ENCODE measurements at regions of chr18 and their contacts with region 1.

Region 1: DNA sequence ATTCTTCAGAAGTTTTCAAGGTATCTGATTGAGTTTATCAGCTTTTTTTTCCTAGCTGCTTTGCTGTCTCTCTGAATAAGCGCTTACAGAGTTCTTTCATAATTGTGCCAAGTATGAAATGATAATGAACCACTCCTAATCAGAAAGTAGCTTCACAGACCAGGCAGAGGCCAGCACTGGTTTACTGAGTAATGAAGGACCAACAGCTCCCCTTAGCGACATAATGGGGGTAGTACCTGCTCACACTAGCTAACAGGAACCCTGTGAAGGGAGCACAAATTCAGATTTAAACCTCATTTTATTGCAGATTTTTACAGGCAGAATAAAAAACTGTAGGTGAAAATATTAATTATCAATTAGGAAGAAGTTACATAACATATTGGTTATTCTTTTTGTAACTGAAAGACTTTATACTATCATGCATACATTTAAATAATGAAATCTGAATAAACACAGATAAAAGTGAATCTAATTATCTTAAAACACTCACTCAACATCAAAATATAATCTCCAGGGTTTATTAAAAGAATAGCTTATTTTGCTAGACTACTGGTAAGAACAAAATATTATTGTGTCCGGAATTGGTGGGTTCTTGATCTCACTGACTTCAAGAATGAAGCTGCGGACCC is 53.7 kb upstream of the LRRC30 start:
- DNase-seq: peak in 1 of 2 donors; percentile 61
- H3K4me3 ChIP-seq: no peak overlapping the region
- H3K27ac ChIP-seq: no peak overlapping the region
- H3K4me1 ChIP-seq: peaks cover 0 to 5% (median 0%) of the 10 kb centered on the region in 4 donors
- H3K27me3 ChIP-seq: peaks cover 0 to 13% of the 10 kb centered on the region in 2 donors
- CTCF ChIP-seq: peak; percentile 67 to 69

Region 2: DNA sequence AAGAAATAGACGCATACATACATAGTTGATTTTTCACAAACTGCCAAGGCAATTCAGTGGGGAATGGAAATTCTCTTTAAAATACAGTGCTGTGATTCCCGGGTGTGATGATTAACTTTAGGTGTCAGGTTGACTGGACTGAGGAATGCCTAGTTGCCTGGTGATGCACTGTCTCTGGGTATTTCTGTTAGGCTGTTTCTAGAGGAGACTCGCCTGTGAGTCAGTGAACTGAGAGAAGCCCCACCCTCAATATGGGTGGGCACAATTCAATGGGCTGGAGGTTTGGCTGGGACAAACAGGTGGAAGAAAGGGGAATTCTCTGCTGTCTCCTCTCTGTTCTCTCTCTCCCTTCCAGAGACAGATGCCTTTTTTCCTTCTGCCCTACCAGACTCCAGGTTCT is 260.2 kb before region 1 on chr18:
- intact Hi-C with region 1: loop called (anchors 5 kb)
- DNase-seq: no peak
- H3K4me3 ChIP-seq: no peak overlapping the region
- H3K27ac ChIP-seq: no peak overlapping the region
- H3K4me1 ChIP-seq: no peaks in the 10 kb centered on the region
- H3K27me3 ChIP-seq: peaks cover 0 to 8% of the 10 kb centered on the region in 2 donors
- CTCF ChIP-seq: no peak

Region 3: DNA sequence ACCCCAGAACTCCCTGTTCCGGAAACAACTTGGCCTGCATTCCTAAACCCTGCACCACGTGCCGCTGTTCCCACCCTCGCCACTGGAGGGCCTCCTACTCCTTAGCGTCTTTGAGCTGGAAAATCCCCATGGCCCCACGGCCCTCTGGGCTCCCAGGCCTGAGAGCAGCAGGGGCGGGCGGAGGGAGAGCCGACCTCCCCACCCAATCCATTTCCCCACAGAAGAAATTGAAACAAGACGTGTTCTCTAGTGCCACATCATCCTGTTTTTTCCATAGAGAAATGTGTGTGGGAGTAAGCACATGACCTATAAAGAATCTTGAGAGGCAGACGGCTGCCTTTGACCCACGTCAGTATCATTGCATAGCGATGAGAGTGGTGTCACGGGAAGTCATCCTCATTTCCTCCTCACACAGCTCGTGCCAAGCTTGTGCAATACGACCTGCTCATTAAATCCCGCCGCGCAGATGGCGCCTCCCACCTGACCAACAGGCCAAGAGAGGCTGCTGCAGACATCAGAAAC is 138.8 kb before region 1 on chr18:
- intact Hi-C with region 1: loop called (anchors 2 kb)
- DNase-seq: peak; percentile 91 to 94
- H3K4me3 ChIP-seq: peak overlapping the region; percentile 33 to 40
- H3K27ac ChIP-seq: peak overlapping the region; percentile 52 to 58
- H3K4me1 ChIP-seq: peaks cover 0 to 14% (median 8%) of the 10 kb centered on the region in 4 donors
- H3K27me3 ChIP-seq: no peaks in the 10 kb centered on the region
- CTCF ChIP-seq: peak; percentile 76 to 78

Region 4: GRCh38 chr18:7447318-7448028 is 270.2 kb after region 1 on chr18:
- intact Hi-C with region 1: no loop called
- DNase-seq: no peak
- H3K4me3 ChIP-seq: no peak overlapping the region
- H3K27ac ChIP-seq: no peak overlapping the region
- H3K4me1 ChIP-seq: no peaks in the 10 kb centered on the region
- H3K27me3 ChIP-seq: no peaks in the 10 kb centered on the region
- CTCF ChIP-seq: no peak

Measured in tibial artery (tissue), 4 donors.